ENCODE measurements at regions of chr4 and their contacts with region 1.

Region 1: DNA sequence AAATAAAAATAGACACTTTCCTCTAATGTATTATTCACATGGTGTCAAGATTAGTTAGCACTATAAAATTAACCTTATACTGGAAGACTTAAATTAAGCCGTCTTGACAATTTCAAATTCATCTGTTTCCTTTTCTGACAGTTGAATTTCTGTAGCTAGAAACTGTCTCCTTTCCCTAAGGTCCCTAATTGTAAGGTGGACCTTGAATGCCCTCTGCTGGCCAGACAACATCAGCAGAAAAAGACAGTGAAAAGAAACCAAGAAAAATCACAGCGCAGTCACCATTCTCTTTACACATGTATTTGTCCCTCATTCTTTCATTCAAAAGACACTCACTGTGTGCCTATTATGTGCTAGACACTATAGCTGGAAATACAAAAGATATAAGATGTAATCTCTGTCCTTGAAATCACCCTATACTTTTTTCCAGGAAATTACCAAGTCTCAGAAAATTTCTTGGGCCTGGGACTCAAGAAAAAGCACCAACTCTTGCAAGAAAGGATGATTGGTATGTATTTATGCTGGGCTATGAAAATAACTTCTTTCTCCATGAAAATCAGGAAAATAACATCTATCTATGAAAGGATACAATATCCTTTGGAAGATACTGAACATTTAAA is 32.7 kb upstream of the AMBN start:
- DNase-seq: peak; percentile 62
- ATAC-seq: no peak
- H3K4me3 Mint-ChIP-seq: no peak overlapping the region
- H3K27ac Mint-ChIP-seq: no peak overlapping the region
- H3K4me1 Mint-ChIP-seq: peaks cover 6% of the 10 kb centered on the region
- H3K27me3 Mint-ChIP-seq: no peaks in the 10 kb centered on the region
- CTCF ChIP-seq: peak; percentile 79

Region 2: DNA sequence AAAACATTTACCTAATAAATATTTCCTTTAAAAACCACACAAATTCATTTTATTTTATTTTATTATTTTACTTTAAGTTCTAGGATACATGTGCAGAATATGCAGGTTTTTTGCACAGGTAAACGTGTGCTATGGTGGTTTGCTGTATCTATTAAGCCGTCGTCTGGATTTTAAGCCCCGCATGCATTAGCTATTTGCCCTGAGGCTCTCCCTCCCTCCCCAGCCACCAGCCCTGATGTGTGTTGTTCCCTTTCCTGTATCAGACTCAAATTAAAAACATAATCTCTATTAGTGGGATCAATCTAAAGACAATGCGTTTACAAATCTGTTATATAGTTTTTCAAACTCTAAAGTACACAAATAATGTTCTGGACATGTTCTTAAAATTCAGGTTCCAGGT is 532.3 kb before region 1 on chr4:
- CTCF ChIA-PET with region 1: no interaction called
- POLR2A ChIA-PET with region 1: no interaction called
- intact Hi-C with region 1: no loop called
- DNase-seq: no peak
- ATAC-seq: no peak
- H3K4me3 Mint-ChIP-seq: no peak overlapping the region
- H3K27ac Mint-ChIP-seq: no peak overlapping the region
- H3K4me1 Mint-ChIP-seq: no peaks in the 10 kb centered on the region
- H3K27me3 Mint-ChIP-seq: no peaks in the 10 kb centered on the region
- CTCF ChIP-seq: no peak

Region 3: GRCh38 chr4:70449220-70449619 is 110.1 kb before region 1 on chr4:
- CTCF ChIA-PET with region 1: no interaction called
- POLR2A ChIA-PET with region 1: no interaction called
- intact Hi-C with region 1: no loop called
- DNase-seq: no peak
- ATAC-seq: no peak
- H3K4me3 Mint-ChIP-seq: no peak overlapping the region
- H3K27ac Mint-ChIP-seq: no peak overlapping the region
- H3K4me1 Mint-ChIP-seq: no peaks in the 10 kb centered on the region
- H3K27me3 Mint-ChIP-seq: no peaks in the 10 kb centered on the region
- CTCF ChIP-seq: no peak

Region 4: DNA sequence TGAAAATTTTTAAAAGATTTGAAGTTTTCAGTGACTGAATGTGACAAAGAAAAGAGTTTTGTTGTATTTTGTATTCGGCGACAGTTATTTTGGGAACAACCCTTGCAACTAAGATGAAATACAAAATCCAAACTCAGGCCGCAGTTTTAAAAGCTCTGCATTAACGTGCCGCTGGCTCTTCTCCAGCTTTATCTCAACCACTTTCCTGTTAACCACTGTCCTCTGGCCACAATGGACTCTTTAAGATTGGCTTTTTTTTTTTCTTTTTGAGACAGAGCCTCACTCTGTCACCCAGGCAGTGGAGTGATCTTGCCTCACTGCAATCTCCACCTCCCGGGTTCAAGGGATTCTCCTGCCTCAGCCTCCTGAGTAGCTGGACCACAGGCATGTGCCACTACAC is 63.1 kb before region 1 on chr4:
- CTCF ChIA-PET with region 1: no interaction called
- POLR2A ChIA-PET with region 1: no interaction called
- intact Hi-C with region 1: no loop called
- DNase-seq: no peak
- ATAC-seq: no peak
- H3K4me3 Mint-ChIP-seq: no peak overlapping the region
- H3K27ac Mint-ChIP-seq: no peak overlapping the region
- H3K4me1 Mint-ChIP-seq: no peaks in the 10 kb centered on the region
- H3K27me3 Mint-ChIP-seq: no peaks in the 10 kb centered on the region
- CTCF ChIP-seq: no peak

Region 5: GRCh38 chr4:70538869-70539268 is 20.5 kb before region 1 on chr4:
- CTCF ChIA-PET with region 1: interaction called, 11 read pairs
- POLR2A ChIA-PET with region 1: no interaction called
- intact Hi-C with region 1: no loop called
- DNase-seq: no peak
- ATAC-seq: no peak
- H3K4me3 Mint-ChIP-seq: no peak overlapping the region
- H3K27ac Mint-ChIP-seq: no peak overlapping the region
- H3K4me1 Mint-ChIP-seq: no peaks in the 10 kb centered on the region
- H3K27me3 Mint-ChIP-seq: peaks cover 5% of the 10 kb centered on the region
- CTCF ChIP-seq: no peak

Measured in activated CD8-positive, alpha-beta T cell treated with anti-CD3 and anti-CD28 coated beads for 36 hours (primary cell).